ENCODE measurements at regions of chr1 and their contacts with region 1.

Region 1: GRCh38 chr1:11645670-11646265 is 8.5 kb downstream of the FBXO2 start:
- DNase-seq: peak in 4 of 5 donors; percentile 64 to 82 (median 72)
- H3K4me3 ChIP-seq: no peak overlapping the region
- H3K27ac ChIP-seq: no peak overlapping the region
- H3K4me1 ChIP-seq: no peaks in the 10 kb centered on the region
- H3K27me3 ChIP-seq: no peaks in the 10 kb centered on the region
- CTCF ChIP-seq: no peak
- EP300 ChIP-seq: no peak
- POLR2A ChIP-seq: no peak

Region 2: DNA sequence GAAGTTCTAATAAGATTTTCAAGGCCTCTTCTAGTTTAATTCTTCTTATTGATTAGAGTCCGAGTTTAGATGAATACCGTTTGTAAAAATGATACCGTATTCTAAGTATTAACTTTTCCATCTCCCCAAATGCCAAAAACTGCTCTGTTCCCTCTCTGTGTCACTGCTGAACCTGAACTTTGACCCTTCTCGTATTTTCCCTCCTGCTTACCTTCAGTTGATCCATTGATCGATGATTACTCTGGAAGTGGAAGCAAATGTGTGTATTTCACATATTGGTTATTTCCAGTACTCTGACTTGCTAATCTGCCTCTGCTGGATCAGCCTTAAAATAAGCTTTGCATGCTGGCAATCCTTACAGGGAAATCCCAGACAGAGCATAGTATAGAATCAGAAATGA is 1366.9 kb before region 1 on chr1:
- intact Hi-C with region 1: loop called in 1 of 4 experiments (anchors 5 kb)
- DNase-seq: no peak
- H3K4me3 ChIP-seq: no peak overlapping the region
- H3K27ac ChIP-seq: no peak overlapping the region
- H3K4me1 ChIP-seq: no peaks in the 10 kb centered on the region
- H3K27me3 ChIP-seq: no peaks in the 10 kb centered on the region
- CTCF ChIP-seq: no peak
- EP300 ChIP-seq: no peak
- POLR2A ChIP-seq: no peak

Region 3: DNA sequence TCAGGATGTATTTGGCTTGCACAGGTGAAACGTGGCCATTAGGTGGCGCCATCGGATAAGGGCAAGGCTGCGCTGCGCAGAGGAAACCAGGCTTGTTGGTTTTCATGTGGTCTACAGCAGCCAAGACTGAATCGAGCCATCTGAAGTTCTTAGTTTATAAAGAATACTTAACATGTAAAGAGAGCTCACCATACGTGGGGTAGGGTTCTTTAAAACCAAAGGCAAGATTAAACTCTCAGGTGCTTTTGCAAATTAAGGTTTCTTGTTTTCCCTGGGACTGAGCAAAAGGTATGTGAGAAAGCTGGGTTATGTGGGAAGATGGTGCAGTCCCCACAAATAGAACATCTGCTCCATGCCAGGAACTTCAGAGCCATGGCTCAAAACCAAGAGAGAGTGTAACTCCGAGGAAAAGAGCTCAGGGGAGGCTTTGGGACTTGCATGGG is 608.0 kb before region 1 on chr1:
- intact Hi-C with region 1: loop called (anchors 2 to 5 kb)
- DNase-seq: peak; percentile 81 to 91 (median 88)
- H3K4me3 ChIP-seq: no peak overlapping the region
- H3K27ac ChIP-seq: no peak overlapping the region
- H3K4me1 ChIP-seq: no peaks in the 10 kb centered on the region
- H3K27me3 ChIP-seq: no peaks in the 10 kb centered on the region
- CTCF ChIP-seq: peak; percentile 87 to 94 (median 89)
- EP300 ChIP-seq: no peak
- POLR2A ChIP-seq: no peak

Region 4: DNA sequence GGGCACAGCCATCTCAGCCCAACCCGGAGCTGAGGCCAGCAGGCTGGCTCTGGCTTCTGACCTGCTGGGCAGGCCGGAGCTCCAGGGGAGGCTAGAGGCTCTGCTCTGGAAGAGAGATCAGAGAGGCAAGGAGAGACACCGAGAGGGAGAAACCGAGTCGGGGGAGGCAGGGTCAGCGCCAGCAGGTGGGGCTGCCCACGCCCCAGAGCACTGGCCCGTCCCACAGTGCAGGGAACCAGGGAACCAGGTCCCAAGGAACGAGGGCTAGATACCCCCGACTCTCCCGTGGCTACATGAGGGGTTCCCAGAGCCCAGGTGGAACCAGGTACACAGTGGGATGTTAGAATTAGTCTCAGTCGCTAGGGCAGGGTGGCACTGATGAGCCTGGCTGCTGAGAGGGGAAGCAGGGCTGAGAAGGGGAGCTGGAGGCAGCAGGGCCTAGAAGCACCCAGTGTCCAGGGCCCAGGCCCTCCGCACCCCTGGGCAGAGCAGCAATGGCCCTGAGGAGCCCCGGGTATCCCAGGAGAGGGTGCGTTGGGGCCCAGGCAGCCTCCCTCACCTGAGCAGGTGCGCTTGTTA is 600.8 kb before region 1 on chr1:
- intact Hi-C with region 1: loop called in 1 of 4 experiments (anchors 5 kb)
- DNase-seq: no peak
- H3K4me3 ChIP-seq: no peak overlapping the region
- H3K27ac ChIP-seq: no peak overlapping the region
- H3K4me1 ChIP-seq: no peaks in the 10 kb centered on the region
- H3K27me3 ChIP-seq: no peaks in the 10 kb centered on the region
- CTCF ChIP-seq: no peak
- EP300 ChIP-seq: no peak
- POLR2A ChIP-seq: no peak

Region 5: DNA sequence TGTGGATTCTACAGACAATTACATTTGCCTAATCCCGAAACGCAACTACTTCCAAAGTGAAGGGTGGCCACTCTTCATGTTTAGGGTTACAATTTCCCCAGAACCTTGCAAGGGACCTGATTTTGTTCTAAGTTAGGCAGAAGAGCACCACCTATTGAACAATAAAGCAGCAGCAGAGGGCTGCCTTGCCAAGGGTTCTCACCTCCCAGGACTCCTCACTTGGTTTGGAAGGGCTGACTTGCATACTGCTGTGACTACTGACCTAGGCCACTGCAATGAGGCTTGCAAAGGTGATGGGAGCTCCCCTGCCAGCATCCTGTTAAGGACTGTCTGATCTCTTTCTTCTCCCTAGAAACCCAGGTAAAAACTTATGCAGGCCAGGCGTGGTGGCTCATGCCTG is 397.6 kb before region 1 on chr1:
- intact Hi-C with region 1: loop called in 3 of 4 experiments (anchors 2 to 5 kb)
- DNase-seq: no peak
- H3K4me3 ChIP-seq: no peak overlapping the region
- H3K27ac ChIP-seq: no peak overlapping the region
- H3K4me1 ChIP-seq: no peaks in the 10 kb centered on the region
- H3K27me3 ChIP-seq: no peaks in the 10 kb centered on the region
- CTCF ChIP-seq: no peak
- EP300 ChIP-seq: no peak
- POLR2A ChIP-seq: no peak

Region 6: GRCh38 chr1:11719313-11720032 is 73.7 kb after region 1 on chr1:
- intact Hi-C with region 1: loop called in 2 of 4 experiments (anchors 5 to 10 kb)
- DNase-seq: peak; percentile 78 to 90 (median 88)
- H3K4me3 ChIP-seq: peak overlapping the region; percentile 10
- H3K27ac ChIP-seq: no peak overlapping the region
- H3K4me1 ChIP-seq: no peaks in the 10 kb centered on the region
- H3K27me3 ChIP-seq: no peaks in the 10 kb centered on the region
- CTCF ChIP-seq: peak; percentile 78 to 88 (median 86)
- EP300 ChIP-seq: no peak
- POLR2A ChIP-seq: no peak

Region 7: DNA sequence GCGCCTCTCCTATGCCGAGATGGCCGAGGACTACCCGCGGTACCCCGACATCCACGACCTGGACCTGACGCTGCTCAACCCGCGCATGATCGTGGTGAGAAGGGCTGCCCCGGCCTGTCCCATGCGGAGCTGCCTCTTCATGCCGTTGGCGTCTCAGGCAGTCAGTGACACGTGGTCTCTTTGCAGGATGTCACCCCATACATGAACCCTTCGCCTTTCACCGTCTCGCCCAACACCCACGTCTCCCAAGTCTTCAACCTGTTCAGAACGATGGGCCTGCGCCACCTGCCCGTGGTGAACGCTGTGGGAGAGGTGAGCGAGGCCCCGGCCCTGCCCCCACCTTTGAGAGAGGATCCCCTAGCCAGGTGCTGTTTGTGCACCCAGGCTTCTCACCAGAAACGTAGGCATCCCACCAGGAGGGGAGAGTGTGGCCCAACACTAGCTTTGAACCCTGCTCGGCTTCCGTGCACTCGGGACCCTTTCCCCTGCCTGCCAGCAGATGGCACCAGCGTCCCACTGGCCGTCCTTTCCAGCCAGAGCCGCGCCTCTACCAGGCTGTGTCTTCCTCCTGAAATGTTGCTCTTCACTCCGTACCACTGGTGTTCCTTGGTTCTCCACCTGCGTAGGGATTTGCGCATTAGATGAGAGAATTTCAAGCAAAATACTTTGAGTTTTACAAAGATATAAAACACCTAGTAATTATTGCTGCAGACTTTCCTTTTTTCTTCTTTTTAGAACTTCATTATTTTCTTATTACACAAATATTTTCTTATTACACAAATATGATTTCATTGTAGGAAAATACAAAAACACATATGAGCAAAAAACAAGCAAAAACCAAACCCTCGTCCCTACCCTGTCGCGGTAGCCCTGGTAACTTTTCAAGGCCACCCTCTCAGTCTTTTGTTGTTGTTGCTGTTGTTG is 192.8 kb after region 1 on chr1:
- intact Hi-C with region 1: no loop called
- DNase-seq: peak; percentile 66 to 84 (median 78)
- H3K4me3 ChIP-seq: no peak overlapping the region
- H3K27ac ChIP-seq: no peak overlapping the region
- H3K4me1 ChIP-seq: peaks cover 6% of the 10 kb centered on the region
- H3K27me3 ChIP-seq: no peaks in the 10 kb centered on the region
- CTCF ChIP-seq: peak; percentile 85 to 87 (median 85)
- EP300 ChIP-seq: no peak
- POLR2A ChIP-seq: no peak

Region 8: DNA sequence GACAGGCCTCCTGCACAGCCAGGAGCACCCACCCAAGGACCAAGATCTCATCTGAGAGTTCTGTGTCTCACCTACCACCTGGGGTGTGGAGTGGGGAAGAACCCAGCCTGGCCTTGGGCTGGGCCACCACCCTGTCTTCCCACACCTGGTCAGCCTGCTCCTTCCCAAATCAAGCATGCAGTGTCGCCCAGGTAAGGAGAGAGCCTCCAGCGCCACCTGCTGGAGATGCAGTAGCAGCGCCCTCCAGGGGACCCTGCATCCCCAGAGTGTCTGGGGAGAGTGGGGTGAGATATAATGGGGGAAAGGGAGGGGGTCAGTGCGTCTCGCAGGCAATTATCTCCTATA is 248.1 kb after region 1 on chr1:
- intact Hi-C with region 1: loop called in 1 of 4 experiments (anchors 10 kb)
- DNase-seq: peak; percentile 37 to 65 (median 50)
- H3K4me3 ChIP-seq: no peak overlapping the region
- H3K27ac ChIP-seq: no peak overlapping the region
- H3K4me1 ChIP-seq: no peaks in the 10 kb centered on the region
- H3K27me3 ChIP-seq: no peaks in the 10 kb centered on the region
- CTCF ChIP-seq: peak; percentile 30 to 67 (median 46)
- EP300 ChIP-seq: no peak
- POLR2A ChIP-seq: no peak

Measured in ovary (tissue), 10 donors.